ENCODE measurements at regions of chr7 and their contacts with region 1.

Region 1: DNA sequence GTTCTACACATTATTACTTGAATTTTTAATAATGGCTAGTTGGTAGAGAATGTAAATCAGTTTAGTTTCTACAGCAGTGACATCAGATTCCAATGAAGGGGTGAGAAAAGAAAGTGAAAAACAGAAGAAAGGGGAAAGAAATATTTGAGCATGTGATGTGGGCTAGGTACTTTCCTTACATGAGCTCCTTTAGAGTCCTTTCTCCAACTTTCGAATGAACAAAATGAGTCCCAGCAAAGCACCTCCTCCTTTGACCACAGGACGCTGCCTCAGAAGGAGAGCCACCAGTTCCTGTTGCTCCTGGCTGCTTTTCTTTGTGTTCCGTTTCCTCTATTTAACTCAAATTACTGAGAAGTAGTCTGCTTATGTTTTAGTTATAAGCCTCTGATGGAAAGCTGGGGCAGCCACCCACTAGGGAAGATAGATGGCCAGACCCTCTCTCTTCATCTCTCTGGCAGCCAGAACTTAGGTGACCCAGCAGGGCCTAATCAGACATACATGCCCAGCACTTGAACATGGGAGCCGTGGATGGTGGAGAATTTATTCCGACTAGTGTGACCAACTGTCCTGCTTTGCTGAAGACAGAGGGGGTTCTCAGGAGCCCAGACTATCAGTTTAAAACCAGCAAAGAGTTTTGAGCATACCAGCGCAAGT is 82.4 kb upstream of the NME8 start:
- DNase-seq: peak; percentile 82
- ATAC-seq: peak; percentile 99
- H3K4me3 ChIP-seq: peak overlapping the region; percentile 38; the same call in 1 of the 2 replicates
- H3K27ac ChIP-seq: peak overlapping the region; percentile 94
- H3K4me1 ChIP-seq: peaks cover 14% of the 10 kb centered on the region
- H3K27me3 ChIP-seq: no peaks in the 10 kb centered on the region
- CTCF ChIP-seq: no peak
- EP300 ChIP-seq: peak; percentile 62 to 83; a peak in 3 of 4 replicates
- POLR2A ChIP-seq: peak; percentile 39; the same call in 1 of the 2 replicates
- RAD21 ChIP-seq: 0 out of 2 replicates have a peak, but pooled peaks have one; percentile 18

Region 2: DNA sequence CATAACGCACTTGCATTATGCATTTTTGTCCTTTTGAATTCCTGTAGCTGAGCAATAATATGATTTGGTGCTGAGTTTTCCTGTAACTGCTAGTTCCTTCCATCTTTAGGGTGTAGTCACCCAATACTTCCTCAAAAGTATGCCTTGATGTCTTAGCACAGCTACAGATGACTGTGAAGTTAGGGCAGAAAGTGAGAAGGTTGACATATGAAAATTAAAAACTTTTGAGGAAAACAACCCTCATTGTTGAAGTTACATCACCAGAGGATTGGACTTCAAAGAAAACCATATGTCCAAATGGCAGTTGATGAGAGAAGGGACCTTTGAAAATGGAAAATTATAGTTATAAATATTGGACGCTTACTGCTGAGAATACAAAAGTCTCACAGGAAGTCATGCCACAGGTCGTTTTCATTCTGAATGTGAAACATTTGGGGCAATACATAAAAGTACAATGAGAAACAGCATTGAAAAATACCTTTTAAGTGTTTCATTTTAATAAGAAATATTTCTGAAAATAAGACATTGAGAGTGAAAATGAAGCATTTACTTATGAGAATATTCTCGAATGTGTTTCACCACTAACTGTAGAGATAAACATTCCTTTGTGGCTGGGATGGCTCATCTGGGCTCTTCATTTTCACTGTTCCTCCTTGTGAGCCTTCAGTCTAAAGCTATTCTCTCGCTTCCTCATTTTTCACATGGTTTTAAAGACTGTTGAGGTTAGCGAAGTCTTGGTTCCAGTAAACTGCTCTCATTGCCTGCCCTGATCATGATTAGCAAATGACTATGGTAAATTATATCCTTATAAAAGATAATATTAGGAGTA is 21.0 kb after region 1 on chr7:
- CTCF ChIA-PET with region 1: interaction called, 8 read pairs
- POLR2A ChIA-PET with region 1: interaction called, 10 read pairs
- RAD21 ChIA-PET with region 1: interaction called, 9 read pairs
- SMC1A ChIA-PET with region 1: interaction called, 86 read pairs
- in situ Hi-C with region 1: no loop called
- intact Hi-C with region 1: no loop called
- DNase-seq: peak; percentile 91
- ATAC-seq: peak; percentile 92
- H3K4me3 ChIP-seq: peak overlapping the region; percentile 25; the same call in 1 of the 2 replicates
- H3K27ac ChIP-seq: peak overlapping the region; percentile 86
- H3K4me1 ChIP-seq: peaks cover 50% of the 10 kb centered on the region
- H3K27me3 ChIP-seq: no peaks in the 10 kb centered on the region
- CTCF ChIP-seq: no peak
- EP300 ChIP-seq: peak; percentile 83 to 89; a peak in 3 of 4 replicates
- POLR2A ChIP-seq: no peak
- RAD21 ChIP-seq: no peak

Region 3: DNA sequence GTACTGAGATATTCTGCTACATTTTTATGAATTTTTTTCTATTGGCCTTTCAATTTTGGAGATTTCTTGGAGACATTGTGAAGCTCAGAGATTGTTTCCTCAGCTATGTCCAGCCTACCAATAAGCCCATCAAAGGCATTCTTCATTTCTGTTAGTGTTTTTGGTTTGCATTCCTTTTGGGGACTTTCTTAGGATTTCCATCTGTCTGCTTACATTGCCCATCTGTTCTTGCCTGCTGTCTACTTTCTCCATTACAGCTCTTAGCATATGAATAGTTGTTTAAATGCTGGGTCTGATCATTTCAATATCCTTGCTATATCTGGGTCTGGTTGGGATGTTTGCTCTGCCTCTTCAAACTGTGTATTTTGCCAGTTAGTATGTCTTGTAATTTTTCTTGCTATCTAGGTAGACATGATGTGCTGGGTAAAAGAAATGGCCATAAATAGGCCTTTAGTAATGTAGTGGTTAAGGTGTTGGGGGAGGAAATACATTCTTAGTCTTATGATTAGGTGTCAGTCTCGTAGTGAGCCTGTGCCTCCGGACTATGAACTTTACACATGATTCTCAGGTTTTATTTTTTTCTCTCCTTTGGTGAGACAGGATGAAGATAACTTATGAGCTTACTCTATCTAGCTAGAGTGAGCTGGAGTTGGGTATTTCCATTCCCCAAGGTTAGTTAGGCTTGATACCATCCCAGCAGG is 49.8 kb after region 1 on chr7:
- CTCF ChIA-PET with region 1: interaction called, 8 read pairs
- POLR2A ChIA-PET with region 1: interaction called, 5 read pairs
- RAD21 ChIA-PET with region 1: interaction called, 33 read pairs
- SMC1A ChIA-PET with region 1: interaction called, 63 read pairs
- in situ Hi-C with region 1: no loop called
- intact Hi-C with region 1: loop called (anchors 5 kb)
- DNase-seq: peak; percentile 78
- ATAC-seq: peak; percentile 89
- H3K4me3 ChIP-seq: peak overlapping the region; percentile 6; the same call in 1 of the 2 replicates
- H3K27ac ChIP-seq: peak overlapping the region; percentile 90
- H3K4me1 ChIP-seq: peaks cover 43% of the 10 kb centered on the region
- H3K27me3 ChIP-seq: no peaks in the 10 kb centered on the region
- CTCF ChIP-seq: no peak
- EP300 ChIP-seq: peak; percentile 94 to 95
- POLR2A ChIP-seq: no peak
- RAD21 ChIP-seq: 0 out of 2 replicates have a peak, but pooled peaks have one; percentile 6

Region 4: GRCh38 chr7:37820708-37821468 is 54.9 kb after region 1 on chr7:
- CTCF ChIA-PET with region 1: interaction called, 8 read pairs
- POLR2A ChIA-PET with region 1: interaction called, 5 read pairs
- RAD21 ChIA-PET with region 1: interaction called, 33 read pairs
- SMC1A ChIA-PET with region 1: interaction called, 63 read pairs
- in situ Hi-C with region 1: no loop called
- intact Hi-C with region 1: loop called (anchors 5 kb)
- DNase-seq: no peak
- ATAC-seq: peak; percentile 59
- H3K4me3 ChIP-seq: 0 out of 2 replicates have a peak overlapping the region, but pooled peaks have one; percentile 45
- H3K27ac ChIP-seq: peak overlapping the region; percentile 80
- H3K4me1 ChIP-seq: peaks cover 26% of the 10 kb centered on the region
- H3K27me3 ChIP-seq: no peaks in the 10 kb centered on the region
- CTCF ChIP-seq: no peak
- EP300 ChIP-seq: no peak
- POLR2A ChIP-seq: no peak
- RAD21 ChIP-seq: no peak

Region 5: DNA sequence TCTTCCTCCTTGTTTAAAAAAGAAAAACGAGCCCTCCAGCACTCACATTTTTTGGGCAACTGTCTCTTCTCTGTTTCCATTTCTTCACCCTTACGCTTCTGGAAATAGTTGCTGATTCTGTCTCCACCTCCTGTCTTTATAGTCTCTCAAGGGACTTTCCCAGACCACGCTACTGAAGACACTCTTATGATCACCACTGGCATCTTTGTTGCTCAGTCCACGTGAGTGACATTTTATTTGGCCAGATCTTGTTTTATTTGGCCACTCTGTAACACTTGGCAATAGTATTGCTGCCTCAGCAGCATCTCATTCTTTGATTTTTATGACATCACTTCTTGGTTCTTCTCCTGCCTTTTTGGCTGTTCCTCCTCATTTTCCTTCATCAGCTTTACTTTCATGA is 60.8 kb after region 1 on chr7:
- CTCF ChIA-PET with region 1: interaction called, 5 read pairs
- POLR2A ChIA-PET with region 1: no interaction called
- RAD21 ChIA-PET with region 1: interaction called, 7 read pairs
- SMC1A ChIA-PET with region 1: interaction called, 63 read pairs
- in situ Hi-C with region 1: no loop called
- intact Hi-C with region 1: loop called (anchors 5 kb)
- DNase-seq: no peak
- ATAC-seq: peak; percentile 83
- H3K4me3 ChIP-seq: 0 out of 2 replicates have a peak overlapping the region, but pooled peaks have one; percentile 2
- H3K27ac ChIP-seq: no peak overlapping the region
- H3K4me1 ChIP-seq: peaks cover 7% of the 10 kb centered on the region; the same call in 1 of the 2 replicates
- H3K27me3 ChIP-seq: no peaks in the 10 kb centered on the region
- CTCF ChIP-seq: no peak
- EP300 ChIP-seq: no peak
- POLR2A ChIP-seq: no peak
- RAD21 ChIP-seq: no peak